ENCODE measurements at regions of chr1 and their contacts with region 1.

Region 1: GRCh38 chr1:98053471-98054366 is 132.9 kb upstream of the DPYD start:
- DNase-seq: peak; percentile 50
- H3K4me3 Mint-ChIP-seq: peak overlapping the region; percentile 62
- H3K27ac Mint-ChIP-seq: no peak overlapping the region
- H3K4me1 Mint-ChIP-seq: peaks cover 19% of the 10 kb centered on the region
- H3K27me3 Mint-ChIP-seq: peaks cover 54% of the 10 kb centered on the region

Region 2: GRCh38 chr1:96236156-96236739 is 1817.5 kb before region 1 on chr1:
- CTCF ChIA-PET with region 1: no interaction called
- intact Hi-C with region 1: loop called (anchors 2 kb)
- DNase-seq: peak; percentile 21
- H3K4me3 Mint-ChIP-seq: no peak overlapping the region
- H3K27ac Mint-ChIP-seq: no peak overlapping the region
- H3K4me1 Mint-ChIP-seq: no peaks in the 10 kb centered on the region
- H3K27me3 Mint-ChIP-seq: peaks cover 1% of the 10 kb centered on the region

Region 3: GRCh38 chr1:97137862-97138514 is 915.7 kb before region 1 on chr1:
- CTCF ChIA-PET with region 1: interaction called, 4 read pairs
- intact Hi-C with region 1: loop called (anchors 1 kb)
- DNase-seq: peak; percentile 38
- H3K4me3 Mint-ChIP-seq: no peak overlapping the region
- H3K27ac Mint-ChIP-seq: no peak overlapping the region
- H3K4me1 Mint-ChIP-seq: no peaks in the 10 kb centered on the region
- H3K27me3 Mint-ChIP-seq: no peaks in the 10 kb centered on the region

Region 4: GRCh38 chr1:97243973-97244560 is 809.7 kb before region 1 on chr1:
- CTCF ChIA-PET with region 1: interaction called, 5 read pairs
- intact Hi-C with region 1: loop called (anchors 1 kb)
- DNase-seq: no peak
- H3K4me3 Mint-ChIP-seq: no peak overlapping the region
- H3K27ac Mint-ChIP-seq: no peak overlapping the region
- H3K4me1 Mint-ChIP-seq: no peaks in the 10 kb centered on the region
- H3K27me3 Mint-ChIP-seq: no peaks in the 10 kb centered on the region

Region 5: DNA sequence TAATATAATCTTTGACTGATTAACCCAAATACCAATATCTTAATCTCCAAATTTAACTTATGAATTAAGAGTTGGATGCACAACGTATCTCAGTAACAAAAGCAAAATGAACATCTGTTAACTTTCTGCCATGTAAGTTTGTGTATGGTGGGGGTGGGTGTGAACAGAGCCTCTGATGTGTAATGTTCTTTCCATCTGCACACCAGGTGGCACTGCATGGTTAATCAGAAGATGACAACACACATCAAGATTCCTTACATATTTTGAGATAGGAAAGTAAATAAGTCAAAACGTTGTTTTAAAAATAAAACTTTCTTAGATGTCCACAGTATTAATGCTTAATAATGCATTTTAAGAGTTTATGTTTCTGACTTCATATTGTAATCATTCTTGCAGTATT is 384.8 kb before region 1 on chr1:
- CTCF ChIA-PET with region 1: no interaction called
- intact Hi-C with region 1: loop called (anchors 1 kb)
- DNase-seq: peak; percentile 22
- H3K4me3 Mint-ChIP-seq: no peak overlapping the region
- H3K27ac Mint-ChIP-seq: no peak overlapping the region
- H3K4me1 Mint-ChIP-seq: no peaks in the 10 kb centered on the region
- H3K27me3 Mint-ChIP-seq: no peaks in the 10 kb centered on the region

Region 6: DNA sequence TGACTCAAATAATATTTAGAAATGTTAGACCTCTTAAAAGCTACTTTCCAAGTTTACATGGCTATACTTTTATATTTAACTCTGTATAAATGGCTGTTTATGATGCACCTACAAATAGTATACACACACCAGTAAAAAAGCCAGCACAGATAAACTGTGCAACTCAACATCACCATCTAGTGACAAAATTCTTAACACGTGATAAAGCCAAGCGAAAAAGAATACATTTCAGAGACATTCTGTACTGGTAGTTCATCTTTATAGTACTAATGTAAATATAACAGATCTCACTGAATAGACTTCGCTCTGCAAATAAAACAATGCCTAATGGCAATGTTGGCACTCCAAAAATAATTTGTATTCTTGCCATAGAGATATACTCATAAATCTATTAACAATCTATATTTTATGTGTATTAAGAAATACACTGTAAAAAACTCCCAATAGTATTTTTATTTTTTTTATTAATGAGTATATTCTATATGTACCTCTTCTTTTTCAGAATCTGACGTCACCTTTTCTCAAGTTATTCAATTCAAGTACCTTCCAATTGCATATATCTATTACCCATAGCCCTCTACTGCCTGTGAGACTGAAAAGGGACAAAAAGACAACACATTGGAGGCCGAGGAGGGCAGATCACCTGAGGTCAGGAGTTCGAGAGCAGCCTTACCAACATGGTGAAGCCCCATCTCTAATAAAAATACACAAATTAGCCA is 233.1 kb before region 1 on chr1:
- CTCF ChIA-PET with region 1: interaction called, 6 read pairs
- intact Hi-C with region 1: loop called (anchors 2 kb)
- DNase-seq: no peak
- H3K4me3 Mint-ChIP-seq: no peak overlapping the region
- H3K27ac Mint-ChIP-seq: no peak overlapping the region
- H3K4me1 Mint-ChIP-seq: no peaks in the 10 kb centered on the region
- H3K27me3 Mint-ChIP-seq: no peaks in the 10 kb centered on the region

Region 7: GRCh38 chr1:99707535-99708142 is 1653.9 kb after region 1 on chr1:
- CTCF ChIA-PET with region 1: no interaction called
- intact Hi-C with region 1: loop called (anchors 5 kb)
- DNase-seq: peak; percentile 81
- H3K4me3 Mint-ChIP-seq: no peak overlapping the region
- H3K27ac Mint-ChIP-seq: no peak overlapping the region
- H3K4me1 Mint-ChIP-seq: peaks cover 2% of the 10 kb centered on the region
- H3K27me3 Mint-ChIP-seq: peaks cover 2% of the 10 kb centered on the region

Measured in activated naive CD4-positive, alpha-beta T cell treated with anti-CD3 and anti-CD28 coated beads for 36 hours (primary cell).